Motor neuron (in vitro differentiated cells): ENCODE measurements at regions of chr9 and their contacts with region 1.

Region 1: DNA sequence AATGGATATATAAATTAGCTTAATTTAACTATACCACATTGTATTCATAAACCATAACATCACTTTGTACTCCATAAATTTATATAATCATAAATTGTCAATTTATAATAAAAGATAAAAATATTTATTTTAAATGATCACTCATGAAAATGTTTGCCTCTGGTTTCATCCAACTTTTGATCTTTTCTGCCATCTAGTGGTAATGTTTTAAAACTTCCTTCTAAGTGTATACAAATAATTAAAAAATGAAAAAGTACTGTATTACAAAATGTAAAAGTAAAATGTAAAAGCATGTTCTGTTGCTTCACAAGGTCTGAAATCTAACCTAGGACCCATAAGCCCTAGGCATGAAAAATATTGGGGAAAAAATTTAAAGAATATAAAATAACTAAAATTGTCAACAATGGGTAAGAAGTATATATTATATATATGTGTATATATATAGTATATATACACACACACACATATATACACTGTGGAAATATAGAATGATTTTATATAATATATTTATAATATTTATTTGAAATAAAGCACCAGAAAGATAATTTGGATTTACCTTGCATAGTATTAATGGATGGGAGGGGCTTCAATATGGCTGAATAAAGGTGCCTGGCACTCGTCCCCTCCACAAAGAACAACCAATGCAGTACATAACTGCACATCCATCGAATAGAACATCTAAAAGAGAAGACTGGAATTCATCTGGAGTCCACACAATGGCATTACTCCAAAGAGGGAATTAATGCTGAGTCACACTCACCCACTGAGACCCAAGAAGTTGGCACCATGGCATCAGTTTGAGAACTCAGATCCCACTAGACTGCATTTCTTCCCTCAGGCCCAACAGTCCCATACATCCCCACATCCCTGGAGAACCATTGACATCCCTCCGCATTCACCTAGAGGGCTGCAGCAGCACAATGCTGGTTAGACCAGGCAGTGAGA is 32.5 kb downstream of the ANXA1 start:
- ATAC-seq: no peak
- H3K4me3 ChIP-seq: no peak overlapping the region
- H3K27ac ChIP-seq: no peak overlapping the region
- H3K4me1 ChIP-seq: no peaks in the 10 kb centered on the region

Region 2: DNA sequence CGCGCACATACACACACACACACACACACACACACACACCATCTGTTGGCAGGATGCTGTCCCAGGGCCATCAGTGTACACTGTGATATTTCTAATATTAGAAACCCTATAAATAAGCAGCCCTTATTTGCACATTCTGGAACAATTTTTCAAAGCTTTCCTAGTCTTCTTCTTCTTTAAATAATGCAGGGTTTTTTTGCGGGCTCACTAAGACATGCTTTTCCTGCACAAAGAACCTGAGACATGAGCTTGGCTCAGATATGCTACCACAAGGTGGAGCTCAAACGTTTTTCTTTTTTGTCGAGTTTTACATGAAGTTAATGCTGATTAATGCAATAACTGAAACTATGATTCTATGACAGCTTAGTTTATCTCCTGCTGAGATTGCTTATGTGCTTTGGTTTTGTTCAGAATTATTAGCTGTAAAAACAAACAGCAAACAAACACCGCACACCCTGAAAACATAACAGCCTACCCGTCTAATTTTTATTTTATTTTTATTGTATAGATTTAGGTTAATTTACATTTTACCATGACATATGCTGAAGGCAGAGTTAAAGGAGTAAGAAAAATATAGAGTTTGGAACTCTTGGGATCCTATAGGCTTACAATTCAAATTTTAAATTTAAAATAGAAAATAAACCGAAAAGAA is 327.1 kb before region 1 on chr9:
- in situ Hi-C with region 1: loop called in 7 of 9 experiments (anchors 10 to 25 kb)
- ATAC-seq: peak; percentile 34 to 93 (median 55)
- H3K4me3 ChIP-seq: no peak overlapping the region
- H3K27ac ChIP-seq: no peak overlapping the region
- H3K4me1 ChIP-seq: no peaks in the 10 kb centered on the region

Region 3: DNA sequence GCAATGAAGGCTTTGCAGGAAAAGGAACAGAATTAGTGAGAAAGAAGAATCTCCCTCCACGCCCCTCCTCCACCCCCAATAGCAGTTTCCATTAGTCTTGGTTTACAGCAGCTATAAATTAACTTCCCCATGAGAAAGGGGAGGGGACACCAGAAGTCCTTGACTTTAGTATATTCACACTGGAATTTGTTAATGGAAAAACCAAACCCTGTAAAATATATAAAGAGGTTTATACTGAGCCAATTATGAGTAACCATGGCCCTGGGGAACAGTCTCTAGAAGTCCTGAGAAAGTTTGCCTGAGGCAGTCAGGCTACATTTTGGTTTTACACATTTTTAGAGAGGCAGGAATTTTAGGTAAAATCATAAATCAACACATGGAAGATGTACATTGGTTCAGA is 319.9 kb before region 1 on chr9:
- in situ Hi-C with region 1: loop called in 7 of 9 experiments (anchors 10 to 25 kb)
- ATAC-seq: peak in 1 of 8 experiments; percentile 28
- H3K4me3 ChIP-seq: no peak overlapping the region
- H3K27ac ChIP-seq: no peak overlapping the region
- H3K4me1 ChIP-seq: no peaks in the 10 kb centered on the region

Region 4: GRCh38 chr9:73104342-73104741 is 79.8 kb before region 1 on chr9:
- in situ Hi-C with region 1: loop called in 1 of 9 experiments (anchors 10 kb)
- ATAC-seq: no peak
- H3K4me3 ChIP-seq: no peak overlapping the region
- H3K27ac ChIP-seq: no peak overlapping the region
- H3K4me1 ChIP-seq: no peaks in the 10 kb centered on the region

Region 5: DNA sequence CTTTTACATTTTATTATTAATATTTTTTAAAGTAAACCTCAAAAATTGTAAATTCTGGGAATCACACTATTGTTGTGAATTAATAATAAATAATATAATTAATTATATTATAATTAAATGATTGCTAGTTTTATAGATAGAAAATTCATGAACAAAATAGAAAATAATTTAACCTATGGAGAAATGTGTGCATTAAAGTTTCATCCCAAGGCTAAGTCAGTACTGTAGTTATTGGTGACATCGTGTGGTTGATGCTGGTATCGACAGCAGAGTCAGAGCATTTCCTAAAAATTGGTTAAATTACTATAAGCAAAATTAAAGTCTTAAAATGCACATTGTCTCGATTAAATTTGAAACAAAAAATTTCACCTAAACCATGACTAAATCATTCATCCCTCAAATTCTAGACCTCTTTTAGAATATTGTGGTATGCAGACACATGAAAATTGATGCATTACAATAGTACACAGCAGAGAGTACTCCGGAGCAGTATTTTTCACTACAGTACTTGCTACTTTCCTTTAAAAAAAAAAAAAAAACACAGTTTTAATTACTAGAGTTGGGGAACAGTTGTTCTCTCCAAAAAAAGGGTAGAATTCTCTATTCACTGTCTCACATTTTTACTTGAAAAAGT is 1386.8 kb after region 1 on chr9:
- in situ Hi-C with region 1: loop called in 1 of 9 experiments (anchors 25 kb)
- ATAC-seq: no peak
- H3K4me3 ChIP-seq: no peak overlapping the region
- H3K27ac ChIP-seq: no peak overlapping the region
- H3K4me1 ChIP-seq: peaks cover 0 to 4% of the 10 kb centered on the region in 2 donors